OCI-LY7 (cell line): ENCODE measurements at regions of chr16 and their contacts with region 1.

Region 1: DNA sequence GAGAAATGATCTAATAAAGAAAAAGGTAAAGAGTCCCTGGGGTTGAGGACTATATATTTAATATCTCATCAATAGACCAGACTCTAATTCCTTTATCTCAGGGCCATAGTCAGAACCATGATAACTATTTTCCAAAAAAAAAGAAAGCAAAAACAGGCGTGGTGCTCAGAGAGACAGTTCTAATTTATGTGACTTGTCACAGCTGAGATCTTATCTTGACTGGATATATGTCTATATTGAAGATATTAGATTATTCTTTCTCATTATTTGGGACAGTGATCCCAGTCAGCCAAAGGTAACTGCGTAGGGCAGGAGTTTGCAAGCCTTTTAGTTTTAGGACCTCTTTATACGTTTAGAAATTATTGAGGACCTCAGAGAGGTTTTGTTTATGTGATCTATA is 52.4 kb downstream of the ITFG1 start:
- DNase-seq: no peak
- H3K4me3 ChIP-seq: no peak overlapping the region
- H3K27ac ChIP-seq: no peak overlapping the region
- H3K4me1 ChIP-seq: no peaks in the 10 kb centered on the region
- CTCF ChIP-seq: no peak

Region 2: GRCh38 chr16:47258874-47259461 is 149.5 kb before region 1 on chr16:
- CTCF ChIA-PET with region 1: no interaction called
- POLR2A ChIA-PET with region 1: interaction called, 3 read pairs
- intact Hi-C with region 1: loop called (anchors 10 kb)
- DNase-seq: peak; percentile 47
- H3K4me3 ChIP-seq: no peak overlapping the region
- H3K27ac ChIP-seq: no peak overlapping the region
- H3K4me1 ChIP-seq: no peaks in the 10 kb centered on the region
- CTCF ChIP-seq: peak; percentile 88

Region 3: GRCh38 chr16:47358816-47359215 is 49.7 kb before region 1 on chr16:
- CTCF ChIA-PET with region 1: no interaction called
- POLR2A ChIA-PET with region 1: no interaction called
- intact Hi-C with region 1: no loop called
- DNase-seq: no peak
- H3K4me3 ChIP-seq: no peak overlapping the region
- H3K27ac ChIP-seq: no peak overlapping the region
- H3K4me1 ChIP-seq: no peaks in the 10 kb centered on the region
- CTCF ChIP-seq: no peak

Region 4: GRCh38 chr16:47463771-47464624 is 55.5 kb after region 1 on chr16:
- CTCF ChIA-PET with region 1: no interaction called
- POLR2A ChIA-PET with region 1: no interaction called
- intact Hi-C with region 1: no loop called
- DNase-seq: peak; percentile 13
- H3K4me3 ChIP-seq: peak overlapping the region; percentile 89
- H3K27ac ChIP-seq: peak overlapping the region; percentile 82
- H3K4me1 ChIP-seq: peaks cover 48% of the 10 kb centered on the region
- CTCF ChIP-seq: no peak